HepG2 (cell line): ENCODE measurements at regions of chr5 and their contacts with region 1.

Region 1: GRCh38 chr5:97142521-97143254 is at the start of gene LIX1:
- DNase-seq: peak; percentile 27
- ATAC-seq: peak; percentile 97
- H3K4me3 ChIP-seq: no peak within 1 kb of the TSS
- H3K27ac ChIP-seq: no peak within 1 kb of the TSS
- H3K4me1 ChIP-seq: no peaks in the 10 kb centered on the region
- H3K27me3 ChIP-seq: no peaks in the 10 kb centered on the region
- CTCF ChIP-seq: peak; percentile 69
- EP300 ChIP-seq: no peak
- POLR2A ChIP-seq: no peak
- RAD21 ChIP-seq: peak; percentile 45; the same call in 1 of the 2 replicates
- total RNA-seq, gene LIX1: not detected in 2 replicates

Region 2: DNA sequence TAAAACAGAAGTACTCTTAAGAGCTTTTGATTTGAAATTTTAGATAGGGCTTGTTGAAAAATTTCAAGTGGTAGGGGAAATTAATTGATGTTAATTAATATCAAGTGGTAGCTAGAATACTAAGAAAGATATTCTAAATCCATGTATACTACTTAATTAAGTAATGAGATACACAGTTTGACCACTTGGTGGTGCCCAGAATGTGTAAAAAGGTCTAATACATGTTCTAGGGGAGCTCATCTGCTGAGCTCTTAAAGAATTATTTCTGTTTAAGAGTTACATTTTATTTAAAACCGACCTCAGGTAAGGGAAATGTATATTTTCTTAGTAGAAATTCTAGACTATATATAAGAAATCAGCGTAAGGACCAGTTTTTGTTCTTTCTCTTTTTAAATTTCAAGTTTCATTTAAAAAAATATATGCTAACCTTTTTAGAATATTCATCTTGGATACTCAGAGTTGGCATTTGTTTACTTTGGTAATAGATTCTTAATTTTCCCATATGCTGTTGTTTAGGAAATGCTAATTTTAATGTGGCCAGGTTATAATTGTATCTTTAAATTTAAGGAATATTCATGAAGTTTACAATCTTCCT is 145.3 kb before region 1 on chr5:
- CTCF ChIA-PET with region 1: no interaction called
- POLR2A ChIA-PET with region 1: no interaction called
- in situ Hi-C with region 1: no loop called
- intact Hi-C with region 1: loop called (anchors 1 kb)
- DNase-seq: peak; percentile 41
- ATAC-seq: peak; percentile 77
- H3K4me3 ChIP-seq: no peak overlapping the region
- H3K27ac ChIP-seq: no peak overlapping the region
- H3K4me1 ChIP-seq: peaks cover 10% of the 10 kb centered on the region
- H3K27me3 ChIP-seq: no peaks in the 10 kb centered on the region
- CTCF ChIP-seq: peak; percentile 40; the same call in 1 of the 2 replicates
- EP300 ChIP-seq: no peak
- POLR2A ChIP-seq: no peak
- RAD21 ChIP-seq: no peak

Region 3: DNA sequence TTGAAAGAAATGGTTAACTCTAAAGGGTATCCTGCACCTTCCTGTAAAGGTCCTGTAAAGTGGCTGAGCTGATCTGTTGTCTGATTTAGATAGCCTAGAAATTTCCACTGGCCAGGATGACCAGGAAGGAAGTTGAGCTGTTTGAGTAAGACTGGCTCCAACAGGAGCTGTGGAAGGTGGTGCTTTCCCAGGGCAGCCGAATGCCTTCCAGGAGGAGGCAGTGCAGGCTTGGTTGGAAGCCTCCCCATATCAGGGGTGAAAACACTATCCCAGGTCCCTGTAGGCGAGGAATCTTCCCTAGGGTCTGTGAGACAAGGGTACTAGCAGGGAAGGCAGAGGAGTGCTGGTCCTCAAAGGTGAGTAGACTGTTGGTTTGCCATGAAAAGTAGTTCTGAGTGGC is 98.6 kb before region 1 on chr5:
- CTCF ChIA-PET with region 1: no interaction called
- POLR2A ChIA-PET with region 1: no interaction called
- in situ Hi-C with region 1: no loop called
- intact Hi-C with region 1: loop called (anchors 5 kb)
- DNase-seq: peak; percentile 27
- ATAC-seq: peak; percentile 97
- H3K4me3 ChIP-seq: no peak overlapping the region
- H3K27ac ChIP-seq: no peak overlapping the region
- H3K4me1 ChIP-seq: peaks cover 23% of the 10 kb centered on the region
- H3K27me3 ChIP-seq: no peaks in the 10 kb centered on the region
- CTCF ChIP-seq: peak; percentile 84
- EP300 ChIP-seq: no peak
- POLR2A ChIP-seq: no peak
- RAD21 ChIP-seq: peak; percentile 46

Region 4: DNA sequence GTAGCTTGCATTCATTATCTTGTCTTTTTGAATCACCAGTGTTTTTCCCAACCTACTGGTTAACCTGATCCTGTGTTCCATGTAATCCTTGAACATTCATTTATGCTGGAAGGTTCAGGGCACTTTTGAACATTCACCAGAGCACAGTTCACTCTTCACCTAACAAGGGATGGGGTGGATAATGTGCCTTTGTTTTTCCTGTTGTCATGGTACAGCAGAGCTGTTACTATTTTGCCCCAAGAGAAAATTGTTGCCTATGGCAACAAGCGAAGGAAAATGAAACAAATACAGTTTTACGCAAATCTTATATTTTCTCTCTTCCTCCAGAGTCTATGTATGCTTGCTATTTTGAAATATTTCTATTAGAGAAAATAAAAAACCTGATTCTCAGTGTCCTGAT is 100.7 kb after region 1 on chr5:
- CTCF ChIA-PET with region 1: no interaction called
- POLR2A ChIA-PET with region 1: no interaction called
- in situ Hi-C with region 1: no loop called
- intact Hi-C with region 1: no loop called
- DNase-seq: peak; percentile 2
- ATAC-seq: no peak
- H3K4me3 ChIP-seq: no peak overlapping the region
- H3K27ac ChIP-seq: no peak overlapping the region
- H3K4me1 ChIP-seq: no peaks in the 10 kb centered on the region
- H3K27me3 ChIP-seq: no peaks in the 10 kb centered on the region
- CTCF ChIP-seq: no peak
- EP300 ChIP-seq: no peak
- POLR2A ChIP-seq: no peak
- RAD21 ChIP-seq: no peak

Region 5: GRCh38 chr5:97458851-97459250 is 316.2 kb after region 1 on chr5:
- CTCF ChIA-PET with region 1: no interaction called
- POLR2A ChIA-PET with region 1: no interaction called
- in situ Hi-C with region 1: no loop called
- intact Hi-C with region 1: no loop called
- DNase-seq: no peak
- ATAC-seq: no peak
- H3K4me3 ChIP-seq: no peak overlapping the region
- H3K27ac ChIP-seq: no peak overlapping the region
- H3K4me1 ChIP-seq: no peaks in the 10 kb centered on the region
- H3K27me3 ChIP-seq: no peaks in the 10 kb centered on the region; a peak in 1 of 5 replicates
- CTCF ChIP-seq: no peak
- EP300 ChIP-seq: no peak
- POLR2A ChIP-seq: no peak
- RAD21 ChIP-seq: no peak